CD4-positive, alpha-beta T cell (primary cell): ENCODE measurements at regions of chr6 and their contacts with region 1.

Region 1: DNA sequence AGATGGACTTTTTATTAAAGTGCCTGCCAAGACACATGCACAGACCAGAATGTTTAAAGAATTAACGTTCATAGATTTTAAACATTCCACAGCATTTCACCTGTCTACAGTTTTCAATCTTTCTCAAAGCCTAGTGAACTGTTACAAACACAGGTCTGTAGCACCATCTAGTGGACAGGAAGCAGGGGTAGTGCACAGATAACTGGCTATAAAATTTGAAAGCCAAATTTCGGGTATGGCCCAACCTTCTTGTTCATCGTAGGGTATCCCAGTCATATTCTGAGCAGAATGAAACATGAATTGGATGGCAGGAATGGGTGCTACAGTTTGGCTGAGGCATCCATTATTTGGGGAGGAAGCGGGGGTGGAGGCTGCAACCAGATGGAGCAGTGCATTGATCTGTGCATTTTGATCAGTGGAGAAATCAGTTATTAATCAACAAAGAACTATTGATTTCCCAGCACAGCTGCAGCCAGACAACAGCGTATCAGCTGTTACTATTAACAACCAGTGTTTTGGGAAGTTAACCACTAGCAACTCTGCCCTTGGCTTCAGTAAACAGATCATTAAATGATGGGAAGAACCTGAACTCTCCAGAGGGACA is 56.1 kb upstream of the B3GAT2 start:
- DNase-seq: peak in 4 of 14 experiments; percentile 4 to 67 (median 56)
- ATAC-seq: peak; percentile 48
- H3K4me3 ChIP-seq: no peak overlapping the region
- H3K4me3 Mint-ChIP-seq: no peak overlapping the region
- H3K27ac ChIP-seq: no peak overlapping the region
- H3K27ac Mint-ChIP-seq: no peak overlapping the region
- H3K4me1 ChIP-seq: no peaks in the 10 kb centered on the region
- H3K4me1 Mint-ChIP-seq: no peaks in the 10 kb centered on the region
- H3K27me3 ChIP-seq: peaks cover 2 to 4% of the 10 kb centered on the region in 2 experiments
- H3K27me3 Mint-ChIP-seq: peaks cover 30% of the 10 kb centered on the region
- CTCF ChIP-seq: peak; percentile 67

Region 2: GRCh38 chr6:70221025-70221714 is 791.8 kb before region 1 on chr6:
- CTCF ChIA-PET with region 1: no interaction called
- POLR2A ChIA-PET with region 1: no interaction called
- intact Hi-C with region 1: loop called in 1 of 2 experiments (anchors 2 kb)
- DNase-seq: peak in 4 of 14 experiments; percentile 5 to 29 (median 20)
- ATAC-seq: no peak
- H3K4me3 ChIP-seq: no peak overlapping the region
- H3K4me3 Mint-ChIP-seq: no peak overlapping the region
- H3K27ac ChIP-seq: no peak overlapping the region
- H3K27ac Mint-ChIP-seq: no peak overlapping the region
- H3K4me1 ChIP-seq: no peaks in the 10 kb centered on the region
- H3K4me1 Mint-ChIP-seq: no peaks in the 10 kb centered on the region
- H3K27me3 ChIP-seq: no peaks in the 10 kb centered on the region
- H3K27me3 Mint-ChIP-seq: peaks cover 18% of the 10 kb centered on the region
- CTCF ChIP-seq: peak; percentile 68

Region 3: GRCh38 chr6:70304616-70305015 is 708.4 kb before region 1 on chr6:
- CTCF ChIA-PET with region 1: no interaction called
- POLR2A ChIA-PET with region 1: no interaction called
- intact Hi-C with region 1: loop called in 1 of 2 experiments (anchors 5 kb)
- DNase-seq: no peak
- ATAC-seq: no peak
- H3K4me3 ChIP-seq: no peak overlapping the region
- H3K4me3 Mint-ChIP-seq: no peak overlapping the region
- H3K27ac ChIP-seq: no peak overlapping the region
- H3K27ac Mint-ChIP-seq: no peak overlapping the region
- H3K4me1 ChIP-seq: no peaks in the 10 kb centered on the region
- H3K4me1 Mint-ChIP-seq: no peaks in the 10 kb centered on the region
- H3K27me3 ChIP-seq: peaks cover 3 to 13% of the 10 kb centered on the region in 2 experiments
- H3K27me3 Mint-ChIP-seq: peaks cover 44% of the 10 kb centered on the region
- CTCF ChIP-seq: no peak

Region 4: DNA sequence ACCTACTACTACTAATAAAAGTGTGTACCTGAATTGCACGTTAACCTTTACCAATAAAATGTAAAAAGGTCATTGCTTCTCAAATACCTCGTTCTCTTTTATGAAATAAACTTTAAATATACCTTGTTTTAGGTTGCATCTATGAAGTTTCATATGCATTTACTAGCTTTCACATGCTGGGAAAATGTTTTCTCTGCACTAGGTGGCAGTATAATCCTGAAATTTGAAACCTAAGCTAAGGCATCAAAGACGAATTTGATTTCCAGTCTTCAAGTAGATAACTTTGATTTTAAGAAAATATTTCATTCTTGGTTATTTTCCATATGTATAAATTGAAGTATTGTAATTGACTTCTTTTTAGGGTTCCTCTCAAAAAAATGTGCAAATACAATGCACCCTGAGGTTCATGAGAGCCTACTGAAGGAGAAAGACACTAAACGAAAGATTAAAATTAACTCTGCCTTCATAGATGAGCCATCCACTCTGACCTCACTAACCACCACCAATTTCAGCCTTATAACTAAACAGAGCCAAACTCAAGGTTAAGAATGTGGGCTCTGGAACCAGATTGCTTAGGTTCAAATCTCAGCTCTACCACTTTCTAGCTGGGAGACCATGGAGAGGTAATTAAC is 702.8 kb before region 1 on chr6:
- CTCF ChIA-PET with region 1: no interaction called
- POLR2A ChIA-PET with region 1: no interaction called
- intact Hi-C with region 1: loop called (anchors 2 to 5 kb)
- DNase-seq: peak in 3 of 14 experiments; percentile 39 to 44 (median 40)
- ATAC-seq: no peak
- H3K4me3 ChIP-seq: no peak overlapping the region
- H3K4me3 Mint-ChIP-seq: no peak overlapping the region
- H3K27ac ChIP-seq: no peak overlapping the region
- H3K27ac Mint-ChIP-seq: no peak overlapping the region
- H3K4me1 ChIP-seq: no peaks in the 10 kb centered on the region
- H3K4me1 Mint-ChIP-seq: no peaks in the 10 kb centered on the region
- H3K27me3 ChIP-seq: peaks cover 0 to 6% of the 10 kb centered on the region in 2 experiments
- H3K27me3 Mint-ChIP-seq: peaks cover 39% of the 10 kb centered on the region
- CTCF ChIP-seq: peak; percentile 60

Region 5: GRCh38 chr6:70369332-70369950 is 643.5 kb before region 1 on chr6:
- CTCF ChIA-PET with region 1: no interaction called
- POLR2A ChIA-PET with region 1: no interaction called
- intact Hi-C with region 1: loop called in 1 of 2 experiments (anchors 5 kb)
- DNase-seq: peak; percentile 40 to 82 (median 51)
- ATAC-seq: peak; percentile 90
- H3K4me3 ChIP-seq: no peak overlapping the region
- H3K4me3 Mint-ChIP-seq: no peak overlapping the region
- H3K27ac ChIP-seq: no peak overlapping the region
- H3K27ac Mint-ChIP-seq: no peak overlapping the region
- H3K4me1 ChIP-seq: peaks cover 3% of the 10 kb centered on the region
- H3K4me1 Mint-ChIP-seq: no peaks in the 10 kb centered on the region
- H3K27me3 ChIP-seq: no peaks in the 10 kb centered on the region
- H3K27me3 Mint-ChIP-seq: peaks cover 24% of the 10 kb centered on the region
- CTCF ChIP-seq: peak; percentile 86

Region 6: DNA sequence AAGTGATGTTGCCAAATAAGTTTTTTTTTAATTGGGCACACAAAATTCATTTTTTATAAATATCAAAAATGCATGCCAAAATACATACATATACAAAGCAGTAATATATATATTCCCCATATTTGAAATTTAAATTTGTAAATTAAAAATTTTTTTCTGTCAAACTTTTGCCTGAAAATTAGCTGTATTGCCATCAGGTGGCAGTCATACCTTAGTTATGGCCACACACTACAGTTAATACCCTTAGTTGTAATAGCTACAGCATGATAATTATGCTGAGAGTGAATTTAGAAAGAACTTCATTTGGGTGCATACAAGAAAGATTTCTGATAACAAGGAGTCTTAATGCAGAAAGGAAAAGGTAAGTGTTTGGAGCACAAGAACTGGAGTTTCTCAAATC is 492.4 kb before region 1 on chr6:
- CTCF ChIA-PET with region 1: no interaction called
- POLR2A ChIA-PET with region 1: no interaction called
- intact Hi-C with region 1: loop called in 1 of 2 experiments (anchors 10 kb)
- DNase-seq: peak in 4 of 14 experiments; percentile 14 to 51 (median 42)
- ATAC-seq: no peak
- H3K4me3 ChIP-seq: no peak overlapping the region
- H3K4me3 Mint-ChIP-seq: no peak overlapping the region
- H3K27ac ChIP-seq: no peak overlapping the region
- H3K27ac Mint-ChIP-seq: no peak overlapping the region
- H3K4me1 ChIP-seq: no peaks in the 10 kb centered on the region
- H3K4me1 Mint-ChIP-seq: peaks cover 7% of the 10 kb centered on the region
- H3K27me3 ChIP-seq: no peaks in the 10 kb centered on the region
- H3K27me3 Mint-ChIP-seq: no peaks in the 10 kb centered on the region
- CTCF ChIP-seq: peak; percentile 56

Region 7: DNA sequence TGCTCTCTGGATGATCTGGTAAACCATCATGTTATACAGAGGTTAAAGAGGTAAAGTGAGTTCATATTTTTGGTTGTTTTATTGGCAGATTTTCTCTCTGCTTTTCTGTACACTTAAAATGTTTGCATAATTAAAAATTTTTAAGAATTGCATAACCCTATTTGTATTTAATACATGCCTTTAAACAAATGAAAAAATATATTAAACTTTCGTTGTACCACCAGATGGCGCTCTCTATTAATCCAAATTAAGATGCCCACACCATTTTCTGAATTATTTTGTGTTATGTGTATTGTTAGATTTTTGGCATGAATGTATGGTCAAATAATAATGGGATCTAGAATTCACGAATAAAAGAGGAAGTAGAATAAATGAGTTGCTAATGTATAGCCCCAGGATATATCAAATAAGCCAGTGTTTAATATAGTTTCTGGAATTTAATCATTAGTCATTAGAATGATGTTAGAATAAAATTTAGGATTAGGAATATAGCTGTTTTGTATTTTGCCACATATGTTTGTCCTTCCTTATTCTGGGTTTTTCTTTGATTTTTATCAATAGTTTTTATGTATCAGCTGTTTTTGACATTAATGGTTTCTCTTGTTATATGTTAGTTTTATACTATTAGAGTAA is 306.4 kb before region 1 on chr6:
- CTCF ChIA-PET with region 1: no interaction called
- POLR2A ChIA-PET with region 1: no interaction called
- intact Hi-C with region 1: loop called (anchors 1 to 5 kb)
- DNase-seq: peak in 4 of 14 experiments; percentile 30 to 74 (median 56)
- ATAC-seq: no peak
- H3K4me3 ChIP-seq: no peak overlapping the region
- H3K4me3 Mint-ChIP-seq: no peak overlapping the region
- H3K27ac ChIP-seq: no peak overlapping the region
- H3K27ac Mint-ChIP-seq: peak overlapping the region; percentile 8
- H3K4me1 ChIP-seq: no peaks in the 10 kb centered on the region
- H3K4me1 Mint-ChIP-seq: peaks cover 66% of the 10 kb centered on the region
- H3K27me3 ChIP-seq: no peaks in the 10 kb centered on the region
- H3K27me3 Mint-ChIP-seq: no peaks in the 10 kb centered on the region
- CTCF ChIP-seq: peak; percentile 82